AG04449 (cell line): ENCODE measurements at regions of chr1 and their contacts with region 1.

Region 1: GRCh38 chr1:225467193-225468020 is 39.6 kb upstream of the LBR start:
- DNase-seq: no peak
- H3K4me3 ChIP-seq: no peak overlapping the region
- CTCF ChIP-seq: no peak

Region 2: GRCh38 chr1:225845571-225846259 is 378.3 kb after region 1 on chr1:
- CTCF ChIA-PET with region 1: interaction called, 105 read pairs
- POLR2A ChIA-PET with region 1: no interaction called
- DNase-seq: no peak
- H3K4me3 ChIP-seq: no peak overlapping the region
- CTCF ChIP-seq: peak; percentile 87